Motor neuron (in vitro differentiated cells): ENCODE measurements at regions of chr12 and their contacts with region 1.

Region 1: GRCh38 chr12:101962486-101962885 is 85.1 kb downstream of the DRAM1 start:
- ATAC-seq: no peak
- H3K4me3 ChIP-seq: no peak overlapping the region
- H3K27ac ChIP-seq: no peak overlapping the region
- H3K4me1 ChIP-seq: peaks cover 5 to 9% of the 10 kb centered on the region in 2 donors

Region 2: DNA sequence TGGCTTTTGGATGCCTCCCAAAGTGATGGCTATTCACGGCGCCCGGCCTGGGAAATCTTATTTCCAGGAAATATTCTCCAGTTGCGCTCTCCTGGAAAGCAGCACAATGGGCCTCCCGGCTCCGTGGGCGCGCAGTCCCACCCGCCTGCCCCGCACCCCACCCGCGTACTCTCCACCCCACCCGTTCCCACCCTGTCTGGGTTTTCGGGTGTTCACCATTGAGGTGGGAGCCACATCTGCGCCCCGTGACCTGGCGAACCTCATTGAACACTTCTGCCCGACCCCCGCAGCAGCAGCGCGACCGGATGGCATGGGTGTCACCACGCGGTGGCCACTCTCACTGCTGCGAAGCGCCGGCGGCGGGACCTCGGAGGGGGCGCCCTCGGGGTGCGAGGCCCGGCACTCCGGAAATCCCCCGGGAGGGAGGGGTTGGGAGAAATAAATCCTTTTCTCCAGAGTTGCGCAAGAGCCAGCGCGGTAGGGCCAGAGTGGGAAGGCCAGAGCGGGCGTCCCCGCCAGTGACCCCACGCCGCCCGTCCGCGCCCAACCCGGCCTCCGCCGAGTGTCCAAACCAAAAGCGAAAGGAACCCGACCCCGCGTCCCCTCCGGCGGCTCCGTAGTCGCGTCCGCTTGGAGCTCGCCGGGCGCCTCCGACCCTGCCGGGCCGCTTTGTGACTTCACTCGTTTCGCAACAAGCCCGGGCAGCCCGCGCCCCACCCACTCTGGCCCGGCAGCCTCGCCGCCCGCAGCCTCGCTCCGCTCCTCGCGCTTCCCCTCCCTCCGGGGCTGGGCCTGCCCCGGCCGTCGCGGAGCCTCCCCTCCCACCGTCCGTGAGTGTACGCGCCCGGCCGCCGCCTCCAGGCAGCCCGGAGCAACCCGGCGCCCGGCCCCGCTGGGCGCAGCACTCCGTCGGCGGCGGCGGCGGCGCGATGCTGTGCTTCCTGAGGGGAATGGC is 85.3 kb before region 1 on chr12 and contains the start of gene DRAM1:
- in situ Hi-C with region 1: no loop called
- ATAC-seq: peak; percentile 79 to 94 (median 92)
- H3K4me3 ChIP-seq: peak within 1 kb of the TSS; percentile 53 to 60 (median 53)
- H3K27ac ChIP-seq: peak within 1 kb of the TSS in 1 of 2 donors; percentile 78
- H3K4me1 ChIP-seq: peaks cover 0 to 4% of the 10 kb centered on the region in 2 donors
- total RNA-seq, gene DRAM1: 0.71 to 110 (median 7.4) TPM

Region 3: GRCh38 chr12:102061560-102062418 is 99.3 kb after region 1 on chr12 and contains the start of gene WASHC3:
- in situ Hi-C with region 1: loop called in 1 of 9 experiments (anchors 25 kb)
- ATAC-seq: peak; percentile 96 to 99 (median 98)
- H3K4me3 ChIP-seq: peak within 1 kb of the TSS; percentile 46 to 86 (median 58)
- H3K27ac ChIP-seq: peak within 1 kb of the TSS; percentile 3 to 61
- H3K4me1 ChIP-seq: peaks cover 0 to 3% of the 10 kb centered on the region in 2 donors
- total RNA-seq, gene WASHC3: 25.8 to 76.8 (median 36.8) TPM